HepG2 (cell line): ENCODE measurements at regions of chr7 and their contacts with region 1.

Region 1: GRCh38 chr7:38828026-38828425 is 81.0 kb downstream of the VPS41 start:
- DNase-seq: no peak
- ATAC-seq: no peak
- H3K4me3 ChIP-seq: no peak overlapping the region
- H3K27ac ChIP-seq: no peak overlapping the region
- H3K4me1 ChIP-seq: no peaks in the 10 kb centered on the region
- H3K27me3 ChIP-seq: no peaks in the 10 kb centered on the region
- CTCF ChIP-seq: no peak
- EP300 ChIP-seq: no peak
- POLR2A ChIP-seq: no peak
- RAD21 ChIP-seq: no peak

Region 2: DNA sequence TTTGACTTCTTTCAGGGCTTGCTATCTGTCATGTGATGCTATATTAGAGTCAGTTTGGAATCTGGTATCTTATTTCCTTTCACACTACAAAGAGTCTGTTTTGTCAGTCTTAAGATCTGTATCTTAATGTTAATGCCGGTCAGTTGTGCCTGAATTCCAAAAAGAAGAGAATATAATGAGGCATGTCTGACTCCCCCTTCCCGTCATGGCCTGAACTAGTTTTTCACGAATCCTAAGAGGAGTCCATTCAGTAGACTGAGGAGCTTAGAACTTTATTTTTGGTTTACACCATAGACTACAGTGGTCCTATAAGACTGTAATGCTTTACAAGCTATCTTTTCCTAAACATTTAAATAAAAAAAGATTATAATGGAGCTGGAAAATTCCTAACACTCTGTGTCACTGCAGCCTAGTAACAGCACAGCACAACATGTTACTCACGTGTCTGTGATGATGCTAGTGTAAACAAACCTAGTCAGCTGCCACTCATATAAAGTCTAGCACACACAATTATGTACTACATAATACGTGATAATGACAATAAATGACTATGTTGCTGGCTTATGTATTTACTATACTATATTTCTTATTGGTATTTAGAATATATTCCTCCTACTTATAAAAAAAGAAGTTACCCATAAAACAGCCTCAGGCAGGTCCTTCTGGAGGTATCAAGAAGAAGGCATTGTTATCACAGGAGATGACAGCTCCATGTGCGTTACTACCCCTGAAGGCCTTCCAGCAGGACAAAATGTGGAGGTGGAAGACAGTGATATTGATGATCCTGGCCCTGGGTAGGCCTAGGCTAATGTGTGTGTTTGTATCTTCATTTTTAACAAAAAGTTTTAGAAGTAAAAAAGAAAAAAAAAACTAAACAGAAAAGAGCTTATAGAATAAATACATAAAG is 30.5 kb after region 1 on chr7:
- CTCF ChIA-PET with region 1: no interaction called
- POLR2A ChIA-PET with region 1: no interaction called
- in situ Hi-C with region 1: no loop called
- intact Hi-C with region 1: no loop called
- DNase-seq: no peak
- ATAC-seq: no peak
- H3K4me3 ChIP-seq: no peak overlapping the region
- H3K27ac ChIP-seq: no peak overlapping the region
- H3K4me1 ChIP-seq: peaks cover 6% of the 10 kb centered on the region
- H3K27me3 ChIP-seq: no peaks in the 10 kb centered on the region
- CTCF ChIP-seq: no peak
- EP300 ChIP-seq: no peak
- POLR2A ChIP-seq: no peak
- RAD21 ChIP-seq: no peak

Region 3: GRCh38 chr7:38920731-38921130 is 92.7 kb after region 1 on chr7:
- CTCF ChIA-PET with region 1: no interaction called
- POLR2A ChIA-PET with region 1: no interaction called
- in situ Hi-C with region 1: no loop called
- intact Hi-C with region 1: loop called (anchors 1 kb)
- DNase-seq: no peak
- ATAC-seq: no peak
- H3K4me3 ChIP-seq: no peak overlapping the region
- H3K27ac ChIP-seq: no peak overlapping the region
- H3K4me1 ChIP-seq: no peaks in the 10 kb centered on the region
- H3K27me3 ChIP-seq: no peaks in the 10 kb centered on the region
- CTCF ChIP-seq: no peak
- EP300 ChIP-seq: no peak
- POLR2A ChIP-seq: no peak
- RAD21 ChIP-seq: no peak

Region 4: GRCh38 chr7:39005036-39005435 is 177.0 kb after region 1 on chr7:
- CTCF ChIA-PET with region 1: no interaction called
- POLR2A ChIA-PET with region 1: no interaction called
- in situ Hi-C with region 1: no loop called
- intact Hi-C with region 1: no loop called
- DNase-seq: no peak
- ATAC-seq: no peak
- H3K4me3 ChIP-seq: no peak overlapping the region
- H3K27ac ChIP-seq: no peak overlapping the region
- H3K4me1 ChIP-seq: no peaks in the 10 kb centered on the region
- H3K27me3 ChIP-seq: no peaks in the 10 kb centered on the region; a peak in 2 of 5 replicates
- CTCF ChIP-seq: no peak
- EP300 ChIP-seq: no peak
- POLR2A ChIP-seq: no peak
- RAD21 ChIP-seq: no peak